GM10248 (cell line): ENCODE measurements at regions of chr3 and their contacts with region 1.

Region 1: GRCh38 chr3:49929331-49930240 is at the start of gene MON1A:
- DNase-seq: peak; percentile 91
- CTCF ChIP-seq: no peak

Region 2: DNA sequence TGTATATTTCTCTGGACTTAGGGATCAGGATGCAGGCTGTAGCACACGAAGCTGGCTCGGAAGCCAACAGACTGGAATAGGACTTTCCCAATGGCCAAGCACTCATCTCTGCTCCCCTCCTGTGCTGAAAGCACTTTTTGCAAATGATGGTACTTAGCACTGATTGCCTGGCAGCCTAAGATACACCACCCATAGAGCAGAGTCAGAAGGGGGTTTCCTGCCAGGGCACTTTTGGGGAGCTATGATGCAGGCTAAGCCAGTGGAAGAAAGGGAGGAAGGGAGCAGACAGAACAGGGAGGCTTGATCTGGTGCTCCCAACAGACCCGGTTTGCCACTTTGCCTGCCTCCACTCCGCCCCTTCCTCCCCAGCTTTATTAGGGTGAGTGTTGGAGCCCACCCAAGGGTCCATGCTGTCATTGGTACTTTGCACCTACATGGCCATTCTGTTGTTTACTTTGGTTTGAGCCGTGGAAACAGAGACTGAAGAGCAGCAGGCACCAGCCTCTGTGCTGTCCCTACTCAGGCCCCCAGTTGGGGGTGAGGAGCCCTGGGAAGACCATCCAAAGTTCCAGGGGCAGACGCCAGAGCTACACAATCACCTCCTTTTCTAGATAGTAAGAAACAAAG is 359.4 kb before region 1 on chr3:
- CTCF ChIA-PET with region 1: no interaction called
- POLR2A ChIA-PET with region 1: no interaction called
- DNase-seq: no peak
- CTCF ChIP-seq: no peak

Region 3: DNA sequence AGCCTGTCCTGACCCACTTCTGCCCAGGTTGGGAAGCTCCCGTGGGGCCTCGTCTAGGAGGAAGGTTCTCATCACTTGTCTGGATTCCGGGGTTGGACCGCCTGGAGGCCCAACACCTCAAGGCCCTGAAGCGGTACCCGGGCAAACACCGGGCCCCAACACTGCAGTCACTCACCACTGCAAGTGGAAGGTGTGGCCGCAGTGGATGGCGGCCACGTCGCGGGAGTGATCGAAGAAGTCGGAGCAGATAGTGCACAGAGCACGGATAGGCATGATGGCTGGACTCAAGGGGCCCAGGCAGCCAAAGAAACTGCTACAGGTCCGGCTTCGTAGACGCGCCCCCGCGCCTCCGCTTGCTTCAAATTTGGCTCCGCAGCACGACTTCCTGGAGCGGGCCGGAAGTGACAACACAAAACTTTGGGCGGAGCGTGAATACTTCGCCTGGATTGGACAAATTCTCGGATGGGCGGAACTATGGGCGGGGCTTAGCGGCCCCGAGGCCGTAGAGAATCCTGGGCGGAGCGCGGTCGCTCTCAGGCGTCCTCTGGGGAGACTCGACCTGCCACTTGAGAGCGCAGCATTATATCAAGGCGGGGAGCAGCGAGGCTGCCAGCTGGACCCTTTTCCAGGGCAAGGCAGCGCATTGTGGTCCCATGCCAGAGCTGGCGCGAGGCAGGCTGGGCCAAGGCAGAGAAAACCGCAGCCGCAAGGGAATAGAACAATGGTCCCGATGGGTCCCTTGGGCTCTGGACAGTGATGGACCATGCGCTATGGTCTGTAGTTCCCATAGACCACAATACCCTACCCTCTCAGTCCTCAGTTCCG is 73.2 kb before region 1 on chr3 and contains the start of gene TRAIP:
- CTCF ChIA-PET with region 1: no interaction called
- POLR2A ChIA-PET with region 1: no interaction called
- DNase-seq: peak; percentile 100
- CTCF ChIP-seq: no peak

Region 4: DNA sequence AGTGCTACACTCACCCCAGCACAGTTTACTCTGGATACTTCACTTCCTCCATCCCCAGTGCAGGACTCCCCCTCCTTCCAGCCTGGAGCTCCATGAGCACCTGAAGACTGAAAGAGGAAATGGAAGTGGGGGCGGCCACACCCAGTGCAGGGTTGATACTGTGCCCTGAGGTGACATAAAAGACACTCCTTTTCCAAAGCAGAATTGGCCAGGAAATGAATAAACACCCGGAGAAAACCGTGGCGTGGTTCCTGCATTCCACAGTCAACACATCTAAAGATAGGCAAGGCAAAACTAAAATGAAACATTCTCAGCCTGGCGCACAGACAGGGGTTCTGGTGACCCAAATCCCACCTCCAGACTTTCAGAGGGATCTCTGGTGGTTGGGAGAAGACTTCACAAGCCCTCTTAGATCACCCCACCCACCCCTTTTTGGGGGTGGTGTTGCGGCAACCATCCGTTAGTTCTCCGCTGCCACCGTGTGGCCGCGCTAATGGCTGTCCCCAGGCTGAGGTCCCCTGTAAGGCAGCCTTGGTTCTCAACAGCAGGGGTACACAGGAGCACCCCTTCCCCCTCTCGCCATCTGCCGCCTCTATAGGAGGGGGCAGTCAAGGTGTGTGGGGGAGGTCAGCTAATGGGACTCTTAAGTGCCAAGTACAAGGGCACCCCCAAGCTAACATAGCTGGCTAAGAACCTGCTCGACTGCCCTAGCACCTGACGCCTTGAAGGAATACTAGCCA is 23.4 kb before region 1 on chr3:
- CTCF ChIA-PET with region 1: interaction called, 15 read pairs
- POLR2A ChIA-PET with region 1: no interaction called
- DNase-seq: peak; percentile 75
- CTCF ChIP-seq: peak; percentile 63

Region 5: GRCh38 chr3:49939858-49940666 is 10.5 kb after region 1 on chr3 and contains the start of gene RBM6:
- CTCF ChIA-PET with region 1: interaction called, 22 read pairs
- POLR2A ChIA-PET with region 1: interaction called, 22 read pairs
- DNase-seq: peak; percentile 98
- CTCF ChIP-seq: no peak